ENCODE measurements at regions of chr3 and their contacts with region 1.

Region 1: DNA sequence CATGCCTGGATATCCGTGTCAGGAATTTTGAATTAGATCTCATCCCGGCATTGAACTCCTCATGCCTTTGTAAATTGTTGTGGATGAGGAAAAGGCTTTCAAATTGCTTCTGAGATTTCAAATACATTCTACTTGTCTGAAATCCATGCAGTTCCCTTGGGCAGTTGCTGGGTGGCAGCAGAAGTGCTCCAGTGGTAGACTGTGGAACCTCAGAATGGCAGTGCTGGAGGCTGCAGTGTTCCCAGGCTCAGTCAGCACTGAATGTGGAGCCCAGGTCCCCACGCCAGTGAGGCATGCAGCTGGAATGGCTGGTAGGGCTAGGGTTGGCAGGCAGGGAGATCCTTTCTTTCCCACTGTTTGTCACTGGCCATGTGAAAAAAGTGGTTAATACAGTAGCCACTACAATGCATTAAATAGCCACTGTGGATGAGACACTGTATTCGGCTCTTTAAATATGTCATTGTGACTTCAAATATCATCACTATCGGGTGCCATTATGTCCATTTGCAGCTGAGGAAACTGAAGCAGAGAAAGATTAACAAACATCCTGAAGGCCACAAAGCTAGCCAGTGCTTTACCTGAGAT is 98.6 kb downstream of the TPRG1 start:
- DNase-seq: peak; percentile 88
- H3K4me3 Mint-ChIP-seq: no peak overlapping the region
- H3K27ac Mint-ChIP-seq: peak overlapping the region; percentile 87
- H3K4me1 Mint-ChIP-seq: peaks cover 56% of the 10 kb centered on the region
- H3K27me3 Mint-ChIP-seq: no peaks in the 10 kb centered on the region
- CTCF ChIP-seq: peak; percentile 85

Region 2: DNA sequence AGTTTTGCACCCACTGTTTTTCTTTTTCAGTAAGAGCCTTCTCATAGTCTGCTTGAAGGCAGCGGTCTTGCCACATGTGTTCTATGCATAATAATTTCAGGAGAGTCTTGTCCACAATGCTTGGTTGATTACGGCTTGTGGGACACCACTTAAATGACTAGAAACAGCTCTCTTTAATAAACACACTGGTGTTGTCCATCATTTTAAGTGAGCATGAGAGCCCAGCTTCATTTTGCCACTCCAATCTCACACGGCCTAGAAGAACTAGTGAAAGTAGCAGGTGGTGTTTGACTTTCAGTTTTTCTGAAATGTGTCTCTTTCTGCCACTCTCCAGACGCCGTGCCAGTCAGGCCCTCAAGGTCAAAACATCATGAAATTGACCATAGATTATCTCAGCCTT is 824.3 kb before region 1 on chr3:
- CTCF ChIA-PET with region 1: no interaction called
- POLR2A ChIA-PET with region 1: no interaction called
- intact Hi-C with region 1: no loop called
- DNase-seq: no peak
- H3K4me3 Mint-ChIP-seq: no peak overlapping the region
- H3K27ac Mint-ChIP-seq: no peak overlapping the region
- H3K4me1 Mint-ChIP-seq: no peaks in the 10 kb centered on the region
- H3K27me3 Mint-ChIP-seq: no peaks in the 10 kb centered on the region
- CTCF ChIP-seq: no peak

Region 3: DNA sequence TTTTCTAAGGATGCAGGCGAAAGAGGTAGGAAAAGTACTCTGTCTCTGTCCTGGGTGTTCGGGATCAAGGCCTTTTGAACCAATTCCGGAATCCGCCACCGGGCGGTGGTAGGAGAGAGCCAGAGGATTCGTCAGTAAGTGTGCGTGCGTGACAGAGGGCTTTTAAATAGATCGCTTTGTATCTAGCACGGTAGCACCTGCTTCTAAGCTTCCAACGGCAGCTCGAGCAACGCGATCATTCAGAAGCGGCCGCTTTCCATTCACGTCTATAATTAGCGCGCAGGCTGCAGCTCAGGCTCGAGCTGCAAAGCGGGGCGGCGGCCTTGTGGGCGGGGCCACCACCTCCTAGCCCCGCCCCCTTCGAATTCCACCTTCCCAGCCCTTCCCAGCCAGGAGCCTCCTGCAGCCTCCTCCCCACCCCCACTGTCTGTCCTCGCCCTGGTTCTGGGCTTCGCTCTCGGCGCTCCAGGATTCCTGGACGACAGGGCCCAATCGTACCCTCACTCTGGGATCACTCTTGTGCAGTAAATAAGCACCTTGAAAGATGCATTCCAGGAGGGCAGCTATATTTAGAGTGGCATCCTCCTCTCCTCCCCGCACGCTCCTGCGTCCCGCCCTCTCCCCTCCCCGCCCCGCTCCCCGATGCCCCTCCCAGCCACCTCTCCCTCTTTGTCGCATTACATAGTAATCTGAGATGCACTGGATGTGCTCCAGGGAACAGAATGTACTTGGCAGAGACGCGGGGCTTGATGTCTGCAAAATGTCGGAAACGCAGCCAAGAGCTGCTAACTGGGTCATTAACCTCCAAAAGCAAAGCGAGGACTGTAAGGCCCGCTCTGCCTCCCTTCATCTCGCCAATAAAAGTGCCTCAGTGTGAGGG is 322.7 kb before region 1 on chr3:
- CTCF ChIA-PET with region 1: no interaction called
- POLR2A ChIA-PET with region 1: no interaction called
- intact Hi-C with region 1: no loop called
- DNase-seq: peak; percentile 99
- H3K4me3 Mint-ChIP-seq: peak overlapping the region; percentile 71
- H3K27ac Mint-ChIP-seq: peak overlapping the region; percentile 96
- H3K4me1 Mint-ChIP-seq: peaks cover 58% of the 10 kb centered on the region
- H3K27me3 Mint-ChIP-seq: no peaks in the 10 kb centered on the region
- CTCF ChIP-seq: peak; percentile 46

Region 4: GRCh38 chr3:189001559-189001958 is 268.8 kb before region 1 on chr3:
- CTCF ChIA-PET with region 1: no interaction called
- POLR2A ChIA-PET with region 1: no interaction called
- intact Hi-C with region 1: no loop called
- DNase-seq: peak; percentile 72
- H3K4me3 Mint-ChIP-seq: no peak overlapping the region
- H3K27ac Mint-ChIP-seq: no peak overlapping the region
- H3K4me1 Mint-ChIP-seq: peaks cover 6% of the 10 kb centered on the region
- H3K27me3 Mint-ChIP-seq: no peaks in the 10 kb centered on the region
- CTCF ChIP-seq: no peak

Region 5: DNA sequence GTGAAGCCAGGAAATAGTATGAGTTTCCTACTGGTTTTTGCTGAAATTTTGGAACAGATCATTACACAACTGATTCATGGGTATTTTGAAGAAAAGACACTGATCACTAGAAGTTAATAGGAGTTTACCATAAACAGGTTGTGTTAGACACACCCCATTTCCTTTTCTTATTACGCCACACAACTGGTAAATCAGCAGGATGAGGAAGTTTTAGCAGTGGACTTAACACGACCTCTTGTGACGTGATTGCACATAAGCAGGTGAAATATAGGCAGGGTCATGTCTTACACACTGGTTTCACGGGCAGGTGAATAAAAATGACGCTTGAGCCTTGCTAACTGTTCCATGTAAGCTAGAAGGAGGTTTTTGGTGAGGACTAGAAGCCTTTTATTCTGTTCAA is 125.7 kb before region 1 on chr3:
- CTCF ChIA-PET with region 1: no interaction called
- POLR2A ChIA-PET with region 1: no interaction called
- intact Hi-C with region 1: no loop called
- DNase-seq: peak; percentile 65
- H3K4me3 Mint-ChIP-seq: no peak overlapping the region
- H3K27ac Mint-ChIP-seq: no peak overlapping the region
- H3K4me1 Mint-ChIP-seq: peaks cover 6% of the 10 kb centered on the region
- H3K27me3 Mint-ChIP-seq: peaks cover 11% of the 10 kb centered on the region
- CTCF ChIP-seq: peak; percentile 11

Region 6: GRCh38 chr3:189298469-189299375 is 28.4 kb after region 1 on chr3:
- CTCF ChIA-PET with region 1: interaction called, 94 read pairs
- POLR2A ChIA-PET with region 1: interaction called, 495 read pairs
- intact Hi-C with region 1: no loop called
- DNase-seq: peak; percentile 87
- H3K4me3 Mint-ChIP-seq: no peak overlapping the region
- H3K27ac Mint-ChIP-seq: peak overlapping the region; percentile 64
- H3K4me1 Mint-ChIP-seq: peaks cover 45% of the 10 kb centered on the region
- H3K27me3 Mint-ChIP-seq: no peaks in the 10 kb centered on the region
- CTCF ChIP-seq: no peak

Region 7: DNA sequence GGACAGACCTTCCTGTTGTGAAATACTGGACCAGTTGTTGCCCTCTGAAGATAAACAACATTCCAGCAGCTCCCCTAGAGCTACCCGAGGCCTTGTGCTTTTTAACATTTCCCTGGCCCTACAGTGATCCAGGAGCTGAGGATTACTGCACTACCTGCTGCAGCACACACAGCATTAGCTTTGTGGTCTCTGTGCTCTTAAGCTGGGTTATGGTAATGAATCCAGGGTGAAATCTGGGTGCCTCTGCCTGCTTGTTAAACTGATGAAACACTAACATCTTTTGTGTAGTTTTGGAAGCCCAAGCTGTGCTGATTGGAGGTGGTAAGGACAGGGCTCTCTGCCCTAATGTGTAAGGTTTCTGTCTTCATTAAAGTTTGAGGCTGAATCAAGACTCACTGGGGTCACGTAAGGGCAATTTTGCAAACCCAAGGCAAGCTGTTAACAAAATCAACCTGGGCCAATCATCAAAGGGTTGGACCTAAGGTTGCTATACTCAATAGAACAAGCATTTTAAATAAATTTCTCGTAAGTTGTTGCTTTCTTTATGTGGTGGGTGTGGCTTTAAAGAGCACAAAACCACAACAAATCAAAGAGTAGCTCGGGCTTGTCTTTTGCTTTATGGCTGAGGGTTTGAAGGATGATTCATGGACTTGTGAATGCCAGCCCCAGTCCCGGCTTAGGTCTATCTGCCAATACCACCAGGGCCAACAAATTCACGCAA is 85.3 kb after region 1 on chr3:
- CTCF ChIA-PET with region 1: interaction called, 56 read pairs
- POLR2A ChIA-PET with region 1: interaction called, 111 read pairs
- intact Hi-C with region 1: no loop called
- DNase-seq: peak; percentile 93
- H3K4me3 Mint-ChIP-seq: no peak overlapping the region
- H3K27ac Mint-ChIP-seq: peak overlapping the region; percentile 96
- H3K4me1 Mint-ChIP-seq: peaks cover 36% of the 10 kb centered on the region
- H3K27me3 Mint-ChIP-seq: no peaks in the 10 kb centered on the region
- CTCF ChIP-seq: no peak

Region 8: GRCh38 chr3:189512039-189512438 is 241.7 kb after region 1 on chr3:
- CTCF ChIA-PET with region 1: interaction called, 26 read pairs
- POLR2A ChIA-PET with region 1: interaction called, 87 read pairs
- intact Hi-C with region 1: loop called (anchors 2 kb)
- DNase-seq: no peak
- H3K4me3 Mint-ChIP-seq: no peak overlapping the region
- H3K27ac Mint-ChIP-seq: peak overlapping the region; percentile 99
- H3K4me1 Mint-ChIP-seq: peaks cover 45% of the 10 kb centered on the region
- H3K27me3 Mint-ChIP-seq: no peaks in the 10 kb centered on the region
- CTCF ChIP-seq: no peak

Region 9: GRCh38 chr3:189786479-189787064 is 516.2 kb after region 1 on chr3:
- CTCF ChIA-PET with region 1: interaction called, 17 read pairs
- POLR2A ChIA-PET with region 1: interaction called, 64 read pairs
- intact Hi-C with region 1: no loop called
- DNase-seq: no peak
- H3K4me3 Mint-ChIP-seq: no peak overlapping the region
- H3K27ac Mint-ChIP-seq: no peak overlapping the region
- H3K4me1 Mint-ChIP-seq: peaks cover 5% of the 10 kb centered on the region
- H3K27me3 Mint-ChIP-seq: no peaks in the 10 kb centered on the region
- CTCF ChIP-seq: peak; percentile 20

Region 10: DNA sequence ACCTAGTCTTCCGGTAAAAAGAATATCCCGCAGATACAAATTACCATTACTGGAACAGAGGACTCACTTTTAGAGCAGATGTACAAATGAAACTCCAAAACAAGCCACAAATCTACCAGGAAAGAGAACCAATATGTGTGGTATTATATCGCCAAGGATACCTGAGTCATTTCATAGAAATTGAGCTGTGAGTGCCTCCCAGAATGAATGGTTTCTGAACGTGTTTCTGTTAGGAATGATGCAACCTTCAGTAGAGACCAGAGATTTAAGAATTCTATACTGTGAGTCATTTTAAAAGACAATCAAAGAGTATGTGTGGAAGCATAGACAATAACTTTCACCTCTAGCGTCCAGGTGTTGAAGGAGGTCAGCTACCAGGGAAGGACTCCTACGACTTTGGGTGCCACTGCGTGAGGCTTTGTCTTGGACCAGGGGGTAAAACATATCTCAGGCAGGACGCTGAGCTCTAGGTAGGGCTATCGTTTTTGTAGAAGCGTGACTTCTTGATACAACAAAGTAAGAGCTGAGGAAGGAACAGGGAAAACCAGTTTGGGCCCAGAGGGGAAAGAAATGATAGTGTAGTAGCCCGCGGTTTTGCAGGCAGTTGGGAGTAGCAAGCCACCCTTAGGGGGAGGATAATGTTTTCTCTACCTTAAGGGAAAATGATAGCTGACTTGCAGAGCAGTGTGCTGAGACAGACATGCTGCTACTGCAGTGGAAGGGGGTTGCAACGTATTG is 571.3 kb after region 1 on chr3:
- CTCF ChIA-PET with region 1: interaction called, 11 read pairs
- POLR2A ChIA-PET with region 1: interaction called, 54 read pairs
- intact Hi-C with region 1: loop called (anchors 1 kb)
- DNase-seq: peak; percentile 94
- H3K4me3 Mint-ChIP-seq: peak overlapping the region; percentile 57
- H3K27ac Mint-ChIP-seq: peak overlapping the region; percentile 99
- H3K4me1 Mint-ChIP-seq: peaks cover 58% of the 10 kb centered on the region
- H3K27me3 Mint-ChIP-seq: no peaks in the 10 kb centered on the region
- CTCF ChIP-seq: no peak

Region 11: DNA sequence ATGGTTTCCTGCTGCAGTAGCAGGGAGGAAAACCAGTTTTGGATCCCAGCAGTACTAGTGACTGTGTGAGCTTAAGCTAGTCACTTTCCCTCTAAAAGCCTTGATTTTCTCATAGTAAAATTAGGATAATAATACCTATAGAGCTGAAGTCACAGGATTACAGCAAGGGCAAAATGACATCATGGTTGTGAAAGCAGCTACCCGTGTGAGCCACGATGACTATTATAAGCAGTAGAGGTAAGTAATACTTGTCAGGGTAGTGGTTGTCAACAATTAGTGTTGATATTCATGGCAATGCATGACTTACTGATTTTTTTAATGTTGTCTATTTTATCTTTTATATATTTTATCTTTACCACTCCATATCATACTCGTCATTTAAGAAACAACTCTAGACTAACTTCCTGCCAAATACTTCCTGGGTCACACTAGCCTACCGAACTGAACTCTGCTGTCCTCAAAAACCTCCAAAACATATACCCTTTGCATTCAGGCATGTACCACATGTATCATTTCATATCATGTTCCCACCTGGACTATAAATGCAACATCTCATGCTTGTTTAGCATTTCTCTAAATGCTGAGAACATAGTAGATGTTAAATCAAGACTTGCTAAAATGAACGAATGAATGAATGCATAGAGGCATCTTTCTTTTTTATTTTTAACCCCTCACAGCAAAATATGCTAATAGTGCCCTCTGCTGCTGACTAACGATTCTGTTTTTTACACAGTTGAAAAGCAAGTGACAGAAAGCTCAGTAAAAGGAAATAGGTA is 677.8 kb after region 1 on chr3:
- CTCF ChIA-PET with region 1: interaction called, 70 read pairs
- POLR2A ChIA-PET with region 1: interaction called, 44 read pairs
- intact Hi-C with region 1: loop called (anchors 1 kb)
- DNase-seq: peak; percentile 73
- H3K4me3 Mint-ChIP-seq: no peak overlapping the region
- H3K27ac Mint-ChIP-seq: peak overlapping the region; percentile 74
- H3K4me1 Mint-ChIP-seq: peaks cover 26% of the 10 kb centered on the region
- H3K27me3 Mint-ChIP-seq: no peaks in the 10 kb centered on the region
- CTCF ChIP-seq: peak; percentile 76